ENCODE measurements at regions of chr9 and their contacts with region 1.

Region 1: DNA sequence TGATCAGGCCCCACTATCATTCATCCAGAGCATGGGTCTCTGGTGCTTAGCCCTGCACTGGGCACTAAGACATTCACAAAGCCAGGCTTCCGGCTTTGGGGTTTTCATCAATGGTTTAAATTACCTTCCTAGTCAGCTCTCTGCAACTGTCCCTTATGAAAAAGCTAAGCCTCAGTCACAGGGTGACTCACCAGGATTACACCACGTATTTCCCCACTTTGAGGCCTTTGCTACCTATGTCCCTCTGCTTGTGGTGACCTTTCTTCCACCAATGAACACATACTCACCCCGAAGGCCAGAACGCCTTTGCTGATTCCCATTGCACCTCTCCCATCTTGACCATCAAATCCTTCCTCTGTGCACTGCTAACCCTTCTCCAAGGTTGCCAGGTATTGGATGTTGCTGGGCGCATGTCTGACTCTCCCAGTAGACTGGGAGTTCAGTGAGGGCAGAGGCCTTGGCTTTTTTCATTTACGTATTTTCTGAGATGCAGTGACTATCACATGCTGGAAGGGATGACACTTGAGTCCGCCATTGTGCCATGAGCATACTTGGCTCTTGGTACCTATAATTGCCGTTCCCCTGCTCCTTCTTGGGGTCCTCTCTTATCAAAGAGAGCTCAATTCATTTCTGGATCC is 58.7 kb upstream of the TNFSF8 start:
- DNase-seq: peak; percentile 45
- H3K4me3 ChIP-seq: no peak overlapping the region
- H3K27ac ChIP-seq: no peak overlapping the region
- H3K4me1 ChIP-seq: no peaks in the 10 kb centered on the region
- H3K27me3 ChIP-seq: peaks cover 4% of the 10 kb centered on the region
- CTCF ChIP-seq: no peak

Region 2: GRCh38 chr9:114930056-114930812 is 58.8 kb before region 1 on chr9 and contains the start of gene TNFSF8:
- CTCF ChIA-PET with region 1: no interaction called
- dilution Hi-C with region 1: no loop called
- in situ Hi-C with region 1: no loop called
- intact Hi-C with region 1: loop called (anchors 10 kb)
- DNase-seq: no peak
- H3K4me3 ChIP-seq: no peak within 1 kb of the TSS
- H3K27ac ChIP-seq: no peak within 1 kb of the TSS
- H3K4me1 ChIP-seq: no peaks in the 10 kb centered on the region
- H3K27me3 ChIP-seq: peaks cover 2% of the 10 kb centered on the region
- CTCF ChIP-seq: no peak
- total RNA-seq, gene TNFSF8: not detected

Region 3: DNA sequence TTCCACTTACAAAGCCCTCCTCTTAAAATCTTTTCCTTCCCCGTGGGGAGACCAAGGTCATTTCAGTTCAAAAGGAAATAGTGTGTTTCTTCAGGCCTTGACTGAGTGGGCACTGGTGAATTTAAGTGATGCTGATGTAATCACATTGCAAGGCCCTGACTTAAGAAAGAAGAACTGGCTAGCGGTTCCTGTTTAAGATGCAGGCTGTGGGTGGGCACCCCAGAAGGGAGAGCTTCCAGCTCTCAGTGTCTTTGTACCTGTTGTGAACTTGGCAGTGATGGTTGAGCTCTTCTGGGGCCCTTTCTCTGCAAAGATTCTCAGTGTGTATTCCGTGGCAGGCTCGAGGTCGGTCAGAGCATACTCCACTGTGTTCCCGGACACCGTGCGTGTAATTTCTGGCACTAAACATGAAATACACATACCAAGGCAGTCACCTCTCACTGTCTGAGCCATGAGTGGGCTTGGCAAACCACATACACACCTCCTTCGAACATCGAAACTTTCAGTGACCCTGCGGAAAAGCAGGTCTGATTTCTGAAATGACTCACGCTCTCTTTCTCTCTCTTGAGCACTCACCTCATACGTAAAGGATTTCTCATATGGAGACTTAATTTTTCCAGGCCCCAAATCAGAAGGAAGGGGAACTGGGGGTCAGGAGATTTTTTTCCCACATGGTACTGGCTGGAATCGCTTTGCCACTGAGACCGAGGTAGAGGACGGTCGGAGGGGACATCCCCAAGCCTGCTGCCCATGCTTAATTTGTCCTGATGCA is 46.9 kb after region 1 on chr9:
- CTCF ChIA-PET with region 1: no interaction called
- dilution Hi-C with region 1: no loop called
- in situ Hi-C with region 1: no loop called
- intact Hi-C with region 1: no loop called
- DNase-seq: peak; percentile 99
- H3K4me3 ChIP-seq: no peak overlapping the region
- H3K27ac ChIP-seq: peak overlapping the region; percentile 99
- H3K4me1 ChIP-seq: peaks cover 34% of the 10 kb centered on the region
- H3K27me3 ChIP-seq: no peaks in the 10 kb centered on the region
- CTCF ChIP-seq: no peak